AG04450 (cell line): ENCODE measurements at regions of chr2 and their contacts with region 1.

Region 1: GRCh38 chr2:10832203-10832936 is 19.8 kb upstream of the PDIA6 start:
- DNase-seq: peak; percentile 63
- H3K4me3 ChIP-seq: no peak overlapping the region
- H3K27ac ChIP-seq: no peak overlapping the region
- H3K27me3 ChIP-seq: peaks cover 36% of the 10 kb centered on the region
- CTCF ChIP-seq: peak; percentile 98

Region 2: GRCh38 chr2:10382354-10383061 is 449.9 kb before region 1 on chr2:
- CTCF ChIA-PET with region 1: interaction called, 10 read pairs
- POLR2A ChIA-PET with region 1: no interaction called
- DNase-seq: no peak
- H3K4me3 ChIP-seq: no peak overlapping the region
- H3K27ac ChIP-seq: no peak overlapping the region
- H3K27me3 ChIP-seq: no peaks in the 10 kb centered on the region
- CTCF ChIP-seq: no peak

Region 3: DNA sequence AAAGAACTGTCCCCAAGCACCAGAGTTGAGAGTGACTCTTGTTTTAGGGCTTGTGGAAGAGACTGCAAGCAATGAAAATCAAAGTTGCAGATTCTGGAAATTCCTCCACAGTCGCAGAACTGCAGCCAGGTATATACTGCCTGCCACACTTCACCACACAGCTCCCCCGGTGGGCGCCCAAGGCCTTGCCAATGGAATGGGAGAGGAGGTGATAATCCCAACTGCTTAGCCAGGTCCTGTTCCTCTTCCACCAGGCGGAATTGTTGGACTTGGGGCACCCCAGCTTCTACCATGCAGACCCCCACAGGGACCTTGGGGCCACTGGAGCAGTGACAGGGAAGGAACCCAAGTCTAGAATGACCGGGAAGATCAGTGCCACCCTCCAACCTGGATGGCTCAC is 15.0 kb before region 1 on chr2:
- CTCF ChIA-PET with region 1: interaction called, 23 read pairs
- POLR2A ChIA-PET with region 1: interaction called, 3 read pairs
- DNase-seq: no peak
- H3K4me3 ChIP-seq: no peak overlapping the region
- H3K27ac ChIP-seq: no peak overlapping the region
- H3K27me3 ChIP-seq: peaks cover 38% of the 10 kb centered on the region
- CTCF ChIP-seq: peak; percentile 28; the same call in 1 of the 2 replicates

Region 4: GRCh38 chr2:10883801-10884478 is 51.6 kb after region 1 on chr2:
- CTCF ChIA-PET with region 1: interaction called, 11 read pairs
- POLR2A ChIA-PET with region 1: no interaction called
- DNase-seq: no peak
- H3K4me3 ChIP-seq: no peak overlapping the region
- H3K27ac ChIP-seq: no peak overlapping the region
- H3K27me3 ChIP-seq: peaks cover 7% of the 10 kb centered on the region
- CTCF ChIP-seq: no peak

Region 5: GRCh38 chr2:11073251-11073650 is 240.9 kb after region 1 on chr2:
- CTCF ChIA-PET with region 1: interaction called, 21 read pairs
- POLR2A ChIA-PET with region 1: no interaction called
- DNase-seq: no peak
- H3K4me3 ChIP-seq: no peak overlapping the region
- H3K27ac ChIP-seq: no peak overlapping the region
- H3K27me3 ChIP-seq: no peaks in the 10 kb centered on the region
- CTCF ChIP-seq: peak; percentile 58